IMR-90 (cell line): ENCODE measurements at regions of chr14 and their contacts with region 1.

Region 1: DNA sequence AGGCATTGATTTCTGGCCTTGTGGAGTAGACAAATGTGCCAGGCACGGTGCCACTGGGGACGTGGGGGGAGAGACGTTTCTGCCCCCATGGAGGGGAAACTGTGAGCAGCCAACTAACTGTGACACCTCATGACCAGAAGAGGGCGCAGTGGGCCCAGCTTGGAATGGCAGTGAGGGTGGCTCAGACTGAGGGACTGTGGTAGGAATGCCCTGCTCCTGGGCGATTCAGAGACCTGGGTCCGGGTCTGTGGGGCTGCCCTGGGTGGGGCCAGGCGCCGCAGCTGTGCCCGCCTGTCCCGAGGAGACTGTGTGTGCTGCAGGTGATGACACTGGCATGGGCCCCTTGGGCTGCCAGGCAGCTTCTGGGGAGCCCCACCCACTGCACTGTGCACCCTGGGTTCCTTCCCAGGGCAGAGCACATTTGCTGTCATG is 60.6 kb downstream of the SLC25A47 start:
- DNase-seq: peak; percentile 55
- ATAC-seq: peak; percentile 77
- H3K4me3 ChIP-seq: no peak overlapping the region
- H3K27ac ChIP-seq: no peak overlapping the region
- H3K4me1 ChIP-seq: peaks cover 26% of the 10 kb centered on the region
- H3K27me3 ChIP-seq: no peaks in the 10 kb centered on the region
- CTCF ChIP-seq: peak; percentile 79
- POLR2A ChIP-seq: no peak
- RAD21 ChIP-seq: peak; percentile 82

Region 2: DNA sequence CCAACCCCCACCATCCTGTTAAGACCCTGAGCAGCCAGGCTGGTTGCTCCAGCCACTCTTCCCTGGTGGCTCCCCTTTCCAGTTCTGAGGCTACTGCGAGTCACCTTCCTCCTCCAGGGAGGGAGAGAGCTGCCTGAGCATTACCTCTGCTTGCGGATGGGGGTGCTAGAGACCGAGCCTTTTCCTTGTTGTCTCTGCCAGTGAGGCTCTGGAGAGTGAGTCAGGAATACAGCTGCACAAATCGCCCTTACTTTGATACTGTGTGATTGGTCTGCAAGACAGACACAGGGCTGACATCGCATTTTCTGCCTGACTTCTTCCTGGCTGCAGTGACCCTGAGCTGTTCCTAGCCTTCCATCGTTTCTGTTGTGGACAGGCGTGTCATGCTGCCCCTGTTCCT is 33.7 kb after region 1 on chr14:
- CTCF ChIA-PET with region 1: interaction called, 8 read pairs
- POLR2A ChIA-PET with region 1: no interaction called
- dilution Hi-C with region 1: no loop called
- in situ Hi-C with region 1: no loop called
- intact Hi-C with region 1: loop called (anchors 2 kb)
- DNase-seq: peak; percentile 97
- ATAC-seq: peak; percentile 97
- H3K4me3 ChIP-seq: no peak overlapping the region
- H3K27ac ChIP-seq: 0 out of 2 replicates have a peak overlapping the region, but pooled peaks have one; percentile 5
- H3K4me1 ChIP-seq: peaks cover 10% of the 10 kb centered on the region
- H3K27me3 ChIP-seq: no peaks in the 10 kb centered on the region
- CTCF ChIP-seq: peak; percentile 96
- POLR2A ChIP-seq: peak; percentile 65
- RAD21 ChIP-seq: peak; percentile 98

Region 3: DNA sequence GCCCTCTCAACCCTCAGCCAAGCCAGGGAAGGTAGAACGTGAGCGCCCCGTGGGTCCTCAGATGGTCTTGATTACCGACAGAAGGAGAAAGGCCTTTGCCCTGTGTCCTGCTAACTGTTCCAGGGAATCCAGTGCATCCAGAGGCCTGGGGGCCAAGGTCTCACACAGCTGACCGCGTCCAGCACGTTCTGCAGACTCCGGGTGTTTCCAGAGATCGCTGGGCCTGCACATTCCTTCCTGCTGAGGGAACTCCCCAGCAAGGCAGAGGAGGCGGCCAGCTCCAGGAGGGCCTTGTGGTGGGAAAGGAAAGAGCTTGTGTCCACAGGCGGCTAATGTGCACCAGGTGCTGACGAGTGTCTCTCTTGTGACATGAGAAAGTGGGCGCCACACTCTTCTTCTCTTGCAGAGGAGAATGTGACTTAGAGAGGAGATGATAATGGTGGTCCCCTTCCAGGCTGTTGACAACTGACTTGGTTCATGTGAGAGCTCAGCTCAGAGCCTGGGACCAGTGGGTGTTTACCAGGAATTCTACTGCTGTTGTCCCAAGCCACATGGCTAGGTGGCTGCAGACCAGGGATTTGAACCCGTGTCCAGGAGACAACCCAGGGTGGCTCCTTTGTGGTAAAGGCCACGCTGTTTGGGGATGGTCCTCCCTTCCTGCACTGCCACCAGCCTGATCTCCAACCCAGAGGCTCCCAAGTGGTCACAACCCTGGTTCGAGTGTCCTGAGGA is 296.1 kb after region 1 on chr14:
- CTCF ChIA-PET with region 1: no interaction called
- POLR2A ChIA-PET with region 1: no interaction called
- dilution Hi-C with region 1: no loop called
- in situ Hi-C with region 1: no loop called
- intact Hi-C with region 1: no loop called
- DNase-seq: peak; percentile 73
- ATAC-seq: peak; percentile 55
- H3K4me3 ChIP-seq: no peak overlapping the region
- H3K27ac ChIP-seq: no peak overlapping the region
- H3K4me1 ChIP-seq: peaks cover 10% of the 10 kb centered on the region
- H3K27me3 ChIP-seq: peaks cover 11% of the 10 kb centered on the region
- CTCF ChIP-seq: peak; percentile 30; the same call in 1 of the 2 replicates
- POLR2A ChIP-seq: no peak
- RAD21 ChIP-seq: peak; percentile 18; the same call in 1 of the 2 replicates

Region 4: GRCh38 chr14:100828031-100828769 is 444.5 kb after region 1 on chr14:
- CTCF ChIA-PET with region 1: no interaction called
- POLR2A ChIA-PET with region 1: no interaction called
- dilution Hi-C with region 1: no loop called
- in situ Hi-C with region 1: no loop called
- intact Hi-C with region 1: loop called (anchors 2 kb)
- DNase-seq: peak; percentile 81
- ATAC-seq: peak; percentile 54
- H3K4me3 ChIP-seq: peak overlapping the region; percentile 81
- H3K27ac ChIP-seq: no peak overlapping the region
- H3K4me1 ChIP-seq: peaks cover 6% of the 10 kb centered on the region; the same call in 1 of the 2 replicates
- H3K27me3 ChIP-seq: no peaks in the 10 kb centered on the region
- CTCF ChIP-seq: peak; percentile 77
- POLR2A ChIP-seq: no peak
- RAD21 ChIP-seq: peak; percentile 61

Region 5: DNA sequence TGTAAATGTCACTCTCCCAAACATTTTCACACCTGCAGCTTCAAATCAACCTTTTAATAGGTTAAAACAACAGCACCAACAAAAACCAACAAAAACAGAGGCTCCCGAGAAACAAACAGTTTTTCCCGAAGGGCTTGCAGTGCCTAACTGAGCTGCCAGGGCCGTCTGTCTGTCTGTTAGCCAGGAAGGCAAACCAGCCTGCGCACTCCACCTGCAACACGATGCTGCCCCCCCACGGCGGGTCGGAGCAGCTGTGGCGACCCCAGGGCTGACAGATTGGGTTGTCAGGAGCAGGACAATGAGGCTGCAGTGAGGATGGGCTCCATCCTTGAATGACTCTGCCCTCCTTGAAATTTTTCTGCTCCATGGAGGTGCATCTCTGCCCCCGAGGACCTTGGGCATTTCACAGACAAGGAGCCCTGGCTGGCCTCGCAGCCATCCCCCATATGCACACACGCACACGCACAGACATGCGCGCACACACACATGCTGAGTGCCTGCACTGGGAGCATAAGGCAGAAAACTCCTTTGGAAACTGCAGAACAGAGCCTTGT is 517.2 kb after region 1 on chr14:
- CTCF ChIA-PET with region 1: interaction called, 3 read pairs
- POLR2A ChIA-PET with region 1: no interaction called
- dilution Hi-C with region 1: no loop called
- in situ Hi-C with region 1: no loop called
- intact Hi-C with region 1: loop called (anchors 5 kb)
- DNase-seq: no peak
- ATAC-seq: no peak
- H3K4me3 ChIP-seq: no peak overlapping the region
- H3K27ac ChIP-seq: no peak overlapping the region
- H3K4me1 ChIP-seq: no peaks in the 10 kb centered on the region; the same call in 1 of the 2 replicates
- H3K27me3 ChIP-seq: peaks cover 15% of the 10 kb centered on the region; the same call in 1 of the 2 replicates
- CTCF ChIP-seq: peak; percentile 34
- POLR2A ChIP-seq: no peak
- RAD21 ChIP-seq: peak; percentile 53

Region 6: DNA sequence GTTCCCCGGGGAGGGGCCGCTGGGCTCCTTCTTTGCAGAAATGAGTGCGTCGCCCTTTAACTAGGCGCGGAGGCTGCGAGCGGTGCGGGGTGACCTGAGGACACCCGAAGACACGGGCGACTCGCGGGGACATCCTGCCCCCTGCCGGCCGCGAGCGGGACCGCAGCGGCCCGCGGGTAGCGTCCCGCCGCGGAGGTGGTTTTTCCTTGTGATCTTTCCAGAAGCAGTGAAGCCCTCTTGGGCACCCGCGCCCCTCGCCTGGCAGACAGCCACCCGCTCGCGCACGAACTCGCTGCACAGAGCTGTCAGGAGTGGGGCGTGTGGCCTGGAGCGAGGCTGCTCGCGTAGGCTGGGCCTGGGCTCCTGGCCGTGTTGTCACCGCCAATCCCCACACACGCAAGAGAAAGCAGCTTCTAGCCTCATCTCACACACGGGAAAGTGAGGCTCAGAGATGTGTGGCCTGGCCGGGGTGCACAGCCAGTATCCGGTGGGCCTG is 1244.8 kb after region 1 on chr14:
- CTCF ChIA-PET with region 1: no interaction called
- POLR2A ChIA-PET with region 1: no interaction called
- dilution Hi-C with region 1: no loop called
- in situ Hi-C with region 1: loop called (anchors 10 kb)
- intact Hi-C with region 1: no loop called
- DNase-seq: peak; percentile 36
- ATAC-seq: peak; percentile 99
- H3K4me3 ChIP-seq: peak overlapping the region; percentile 27
- H3K27ac ChIP-seq: no peak overlapping the region
- H3K4me1 ChIP-seq: no peaks in the 10 kb centered on the region
- H3K27me3 ChIP-seq: peaks cover 18% of the 10 kb centered on the region
- CTCF ChIP-seq: peak; percentile 93
- POLR2A ChIP-seq: no peak
- RAD21 ChIP-seq: peak; percentile 88